ENCODE measurements at regions of chr16 and their contacts with region 1.

Region 1: GRCh38 chr16:22297114-22297878 is at the start of gene POLR3E:
- DNase-seq: peak; percentile 100
- ATAC-seq: peak; percentile 92 to 95 (median 93)
- H3K4me3 ChIP-seq: peak within 1 kb of the TSS; percentile 71
- H3K27ac ChIP-seq: peak within 1 kb of the TSS; percentile 96
- H3K4me1 ChIP-seq: peaks cover 14% of the 10 kb centered on the region
- H3K27me3 ChIP-seq: no peaks in the 10 kb centered on the region
- CTCF ChIP-seq: peak; percentile 89
- total RNA-seq, gene POLR3E: 63.8 to 119 (median 92.5) TPM

Region 2: GRCh38 chr16:22007509-22008214 is 289.6 kb before region 1 on chr16 and contains the start of gene MOSMO:
- intact Hi-C with region 1: loop called in 1 of 2 experiments (anchors 5 kb)
- DNase-seq: peak; percentile 82 to 86
- ATAC-seq: peak; percentile 89 to 94 (median 92)
- H3K4me3 ChIP-seq: peak within 1 kb of the TSS; percentile 99
- H3K27ac ChIP-seq: peak within 1 kb of the TSS; percentile 95
- H3K4me1 ChIP-seq: peaks cover 35% of the 10 kb centered on the region
- H3K27me3 ChIP-seq: no peaks in the 10 kb centered on the region
- CTCF ChIP-seq: no peak
- total RNA-seq, gene MOSMO: 7.8 to 13.8 (median 10.5) TPM

Region 3: GRCh38 chr16:22195695-22196558 is 101.4 kb before region 1 on chr16:
- intact Hi-C with region 1: loop called (anchors 1 kb)
- DNase-seq: peak; percentile 81 to 92
- ATAC-seq: peak; percentile 44 to 57 (median 46)
- H3K4me3 ChIP-seq: peak overlapping the region; percentile 73
- H3K27ac ChIP-seq: peak overlapping the region; percentile 82
- H3K4me1 ChIP-seq: peaks cover 23% of the 10 kb centered on the region
- H3K27me3 ChIP-seq: no peaks in the 10 kb centered on the region
- CTCF ChIP-seq: peak; percentile 88

Region 4: DNA sequence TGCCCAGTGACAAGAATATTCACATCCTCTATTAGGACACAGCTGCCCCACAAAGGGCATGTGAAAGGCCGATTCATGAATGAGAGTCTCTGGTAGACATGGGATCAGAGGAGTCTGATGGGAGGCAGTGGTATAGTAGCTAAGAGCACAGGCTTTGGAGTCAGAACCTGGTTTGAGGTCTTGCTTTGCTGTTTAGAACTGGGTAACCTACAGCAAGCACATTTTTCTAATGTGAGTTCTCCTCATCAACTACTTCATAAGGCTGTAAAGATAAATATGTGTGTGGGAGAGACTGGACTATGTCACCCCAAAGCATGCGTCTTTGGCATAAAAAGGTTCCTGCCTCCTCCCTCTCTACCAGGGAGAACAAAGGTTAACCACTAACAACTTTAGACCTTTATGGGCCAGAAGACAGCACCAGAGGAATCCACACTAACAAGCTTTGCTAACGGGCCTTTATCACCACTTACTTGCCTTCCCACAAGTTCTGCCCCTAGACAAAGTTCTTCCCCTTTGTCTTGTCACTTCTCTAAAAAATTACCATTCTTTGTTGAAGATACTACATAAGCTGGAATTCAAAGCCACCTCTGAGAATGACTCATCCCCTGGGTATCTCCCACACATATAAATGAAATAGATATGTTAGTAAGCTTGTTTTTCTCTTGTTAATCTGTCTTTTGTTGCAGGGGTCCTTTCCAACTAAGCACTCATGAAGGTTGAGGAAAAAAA is 56.1 kb after region 1 on chr16:
- intact Hi-C with region 1: no loop called
- DNase-seq: no peak
- ATAC-seq: no peak
- H3K4me3 ChIP-seq: no peak overlapping the region
- H3K27ac ChIP-seq: no peak overlapping the region
- H3K4me1 ChIP-seq: no peaks in the 10 kb centered on the region
- H3K27me3 ChIP-seq: no peaks in the 10 kb centered on the region
- CTCF ChIP-seq: no peak

Measured in psoas muscle (tissue), 8 donors.